ENCODE measurements at regions of chr15 and their contacts with region 1.

Region 1: GRCh38 chr15:88649286-88649733 is 10.5 kb downstream of the ISG20 start:
- DNase-seq: peak; percentile 33 to 85 (median 71)
- ATAC-seq: peak; percentile 86
- H3K4me3 ChIP-seq: peak overlapping the region in 1 of 2 experiments; percentile 10
- H3K4me3 Mint-ChIP-seq: peak overlapping the region; percentile 77
- H3K27ac ChIP-seq: peak overlapping the region; percentile 48 to 83
- H3K27ac Mint-ChIP-seq: peak overlapping the region; percentile 99
- H3K4me1 ChIP-seq: peaks cover 91% of the 10 kb centered on the region
- H3K4me1 Mint-ChIP-seq: peaks cover 90% of the 10 kb centered on the region
- H3K27me3 ChIP-seq: no peaks in the 10 kb centered on the region
- H3K27me3 Mint-ChIP-seq: no peaks in the 10 kb centered on the region
- CTCF ChIP-seq: no peak

Region 2: DNA sequence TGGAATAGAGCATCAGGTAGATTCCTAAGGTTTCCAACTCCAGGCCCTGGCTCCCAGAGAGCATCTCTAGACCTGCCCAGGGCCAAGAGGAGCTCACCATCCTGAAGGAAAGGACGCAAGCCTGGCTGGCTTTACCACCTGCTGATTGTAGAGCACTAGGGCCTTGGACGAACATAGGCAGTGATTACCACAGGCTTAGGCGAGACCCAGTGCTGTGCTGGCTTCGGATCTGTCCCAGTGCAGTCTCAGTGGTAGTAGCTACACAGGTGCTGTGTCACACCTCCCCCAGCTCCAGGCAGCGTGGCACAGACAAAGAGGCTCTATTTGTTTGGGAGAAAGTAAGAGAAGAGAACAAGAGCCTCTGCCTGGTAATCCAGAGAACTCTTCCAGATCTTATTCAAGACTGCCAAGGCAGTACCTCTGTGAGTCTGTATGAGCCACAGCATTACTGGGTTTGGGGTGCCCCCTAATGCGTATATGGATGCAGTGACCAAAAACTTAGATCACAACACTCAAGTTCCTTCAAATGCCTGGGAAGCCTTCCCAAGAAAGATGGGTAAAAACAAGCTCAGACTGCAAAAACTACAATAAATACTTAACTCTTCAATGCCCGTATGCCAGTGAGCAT is 15.0 kb after region 1 on chr15:
- CTCF ChIA-PET with region 1: interaction called, 20 read pairs
- POLR2A ChIA-PET with region 1: interaction called, 3 read pairs
- intact Hi-C with region 1: no loop called
- DNase-seq: peak in 7 of 9 experiments; percentile 29 to 80 (median 66)
- ATAC-seq: peak; percentile 91
- H3K4me3 ChIP-seq: no peak overlapping the region
- H3K4me3 Mint-ChIP-seq: no peak overlapping the region
- H3K27ac ChIP-seq: no peak overlapping the region
- H3K27ac Mint-ChIP-seq: peak overlapping the region; percentile 15
- H3K4me1 ChIP-seq: peaks cover 35% of the 10 kb centered on the region
- H3K4me1 Mint-ChIP-seq: peaks cover 32% of the 10 kb centered on the region
- H3K27me3 ChIP-seq: no peaks in the 10 kb centered on the region
- H3K27me3 Mint-ChIP-seq: peaks cover 6% of the 10 kb centered on the region
- CTCF ChIP-seq: peak; percentile 63

Region 3: DNA sequence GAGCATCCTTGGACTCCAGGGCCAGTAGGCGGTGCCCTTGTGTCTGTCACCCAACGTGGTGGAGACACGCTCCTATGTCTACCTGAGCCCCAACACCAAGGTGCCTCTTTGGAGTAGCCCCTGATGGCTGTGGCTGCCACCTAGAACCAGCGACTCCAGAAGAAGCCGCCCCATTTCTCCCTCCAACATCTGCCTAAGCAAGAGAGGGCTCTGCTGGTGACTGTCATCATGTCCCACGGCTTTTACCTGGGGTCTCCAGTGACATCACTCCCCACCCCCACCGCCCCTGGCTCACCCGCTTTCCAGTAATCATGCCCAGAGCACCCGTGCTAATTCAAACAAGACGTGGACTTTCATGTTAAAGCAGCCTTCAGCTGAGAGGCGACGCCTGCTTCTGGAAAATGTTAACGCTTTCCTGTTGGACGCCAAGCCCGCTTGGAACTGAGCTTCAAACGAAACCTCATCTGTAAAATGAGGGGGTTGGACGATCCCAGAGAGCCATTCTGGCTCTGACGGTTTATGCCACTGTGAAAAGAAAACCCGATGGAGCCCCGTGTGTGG is 46.5 kb after region 1 on chr15:
- CTCF ChIA-PET with region 1: no interaction called
- POLR2A ChIA-PET with region 1: no interaction called
- intact Hi-C with region 1: loop called in 1 of 2 experiments (anchors 2 kb)
- DNase-seq: no peak
- ATAC-seq: no peak
- H3K4me3 ChIP-seq: no peak overlapping the region
- H3K4me3 Mint-ChIP-seq: no peak overlapping the region
- H3K27ac ChIP-seq: no peak overlapping the region
- H3K27ac Mint-ChIP-seq: no peak overlapping the region
- H3K4me1 ChIP-seq: no peaks in the 10 kb centered on the region
- H3K4me1 Mint-ChIP-seq: no peaks in the 10 kb centered on the region
- H3K27me3 ChIP-seq: no peaks in the 10 kb centered on the region
- H3K27me3 Mint-ChIP-seq: peaks cover 2% of the 10 kb centered on the region
- CTCF ChIP-seq: no peak